BJ (cell line): ENCODE measurements at regions of chr15 and their contacts with region 1.

Region 1: DNA sequence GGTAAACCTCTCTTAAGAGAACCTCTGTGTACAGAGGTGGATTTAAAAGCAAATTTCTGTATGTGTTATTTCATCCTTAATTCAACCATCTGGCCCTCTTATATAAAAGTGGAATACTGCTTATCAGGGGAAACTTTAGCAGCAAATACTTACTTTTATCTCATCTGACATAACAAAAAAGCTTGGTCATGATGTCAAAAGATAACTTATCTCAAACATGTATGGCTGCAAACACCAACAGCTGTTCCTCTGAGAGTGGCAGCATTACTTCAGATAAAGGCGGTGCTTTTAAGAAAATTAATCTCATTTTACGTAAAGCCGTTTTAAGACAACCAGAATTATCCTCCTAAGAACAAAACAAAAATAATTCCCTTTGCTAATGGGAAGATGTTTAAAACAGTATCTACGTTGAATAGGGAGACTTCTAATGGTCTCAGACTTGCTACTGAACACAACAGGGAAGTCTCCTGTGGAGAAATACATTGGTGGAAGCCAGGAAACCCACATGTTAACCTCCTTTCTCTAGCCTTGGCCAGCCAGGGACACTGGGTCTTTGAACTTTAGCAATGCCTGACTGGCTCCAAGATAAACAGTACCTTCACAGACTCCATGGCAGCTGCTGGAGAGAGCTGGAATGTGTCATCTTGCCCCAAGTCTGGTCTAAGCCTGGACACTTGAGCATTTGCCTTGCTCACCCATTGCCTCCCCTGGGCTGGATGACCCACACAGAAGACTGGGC is 18.1 kb downstream of the ARRDC4 start:
- DNase-seq: no peak
- H3K4me3 ChIP-seq: no peak overlapping the region
- H3K27me3 ChIP-seq: no peaks in the 10 kb centered on the region
- CTCF ChIP-seq: no peak

Region 2: GRCh38 chr15:97745465-97746071 is 233.0 kb before region 1 on chr15:
- CTCF ChIA-PET with region 1: no interaction called
- POLR2A ChIA-PET with region 1: no interaction called
- DNase-seq: no peak
- H3K4me3 ChIP-seq: no peak overlapping the region
- H3K27me3 ChIP-seq: no peaks in the 10 kb centered on the region
- CTCF ChIP-seq: peak; percentile 48

Region 3: GRCh38 chr15:97875513-97876280 is 102.9 kb before region 1 on chr15:
- CTCF ChIA-PET with region 1: no interaction called
- POLR2A ChIA-PET with region 1: no interaction called
- DNase-seq: no peak
- H3K4me3 ChIP-seq: no peak overlapping the region
- H3K27me3 ChIP-seq: no peaks in the 10 kb centered on the region
- CTCF ChIP-seq: no peak

Region 4: DNA sequence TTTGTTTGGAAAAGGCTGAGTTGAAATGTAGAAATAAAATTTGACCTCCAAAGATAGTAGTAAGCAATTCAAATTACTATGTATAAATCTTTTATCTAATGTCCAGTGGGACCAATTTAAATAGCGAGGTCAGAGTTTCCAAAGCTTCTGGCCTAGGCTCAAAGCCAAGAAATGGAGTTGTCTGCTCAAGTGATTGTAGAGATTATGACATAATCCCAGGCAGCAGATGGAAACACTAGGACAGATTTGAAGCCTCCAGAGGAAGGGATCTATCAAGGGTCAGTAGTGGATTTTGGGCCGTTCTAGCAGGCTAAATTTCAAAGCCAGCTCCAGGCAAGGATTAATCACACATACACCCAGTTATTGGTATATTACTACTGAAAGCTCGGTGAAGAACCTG is 49.1 kb before region 1 on chr15:
- CTCF ChIA-PET with region 1: no interaction called
- POLR2A ChIA-PET with region 1: no interaction called
- DNase-seq: no peak
- H3K4me3 ChIP-seq: no peak overlapping the region
- H3K27me3 ChIP-seq: peaks cover 3% of the 10 kb centered on the region; the same call in 1 of the 2 replicates
- CTCF ChIP-seq: no peak

Region 5: GRCh38 chr15:97995881-97996603 is 17.5 kb after region 1 on chr15:
- CTCF ChIA-PET with region 1: interaction called, 13 read pairs
- POLR2A ChIA-PET with region 1: no interaction called
- DNase-seq: no peak
- H3K4me3 ChIP-seq: no peak overlapping the region
- H3K27me3 ChIP-seq: no peaks in the 10 kb centered on the region
- CTCF ChIP-seq: peak; percentile 51